ENCODE measurements at regions of chr15 and their contacts with region 1.

Region 1: DNA sequence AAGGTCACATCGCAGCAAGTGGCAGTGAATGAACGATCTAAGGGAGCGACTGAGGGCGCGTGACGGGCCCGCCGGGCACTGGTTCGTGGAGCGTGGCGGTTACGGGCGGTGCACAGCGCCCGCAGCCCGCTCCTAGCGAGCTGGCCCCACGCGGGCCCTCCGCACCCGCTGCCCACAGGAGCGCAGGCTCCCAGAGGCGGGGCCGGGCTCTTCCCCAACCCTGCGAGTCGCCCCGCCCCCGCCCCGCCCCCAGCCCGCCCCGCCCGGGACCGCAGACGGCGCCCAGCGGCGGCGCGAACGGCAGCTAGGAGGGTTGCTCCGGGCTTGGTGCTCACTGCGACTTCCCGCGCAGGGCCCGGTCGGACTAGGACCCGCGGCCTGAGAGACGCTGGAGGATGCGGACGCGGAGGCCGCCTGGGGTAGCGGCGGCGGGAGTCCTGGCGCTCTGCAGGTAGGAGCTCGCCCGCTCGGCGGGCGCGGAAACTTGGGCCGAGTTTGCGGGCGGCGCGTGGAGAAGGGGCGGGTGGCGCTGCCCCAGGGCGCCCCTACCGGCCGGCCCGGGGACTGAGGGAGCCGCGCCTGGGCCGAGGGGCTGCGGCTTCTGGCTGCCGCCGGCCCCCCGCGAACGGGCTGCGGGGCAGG is at the start of gene C15orf39:
- DNase-seq: peak; percentile 63 to 81
- H3K4me3 ChIP-seq: peak within 1 kb of the TSS; percentile 95
- H3K4me3 Mint-ChIP-seq: peak within 1 kb of the TSS; percentile 95
- H3K27ac Mint-ChIP-seq: peak within 1 kb of the TSS; percentile 91
- H3K4me1 ChIP-seq: peaks cover 45% of the 10 kb centered on the region
- H3K4me1 Mint-ChIP-seq: peaks cover 29% of the 10 kb centered on the region
- H3K27me3 ChIP-seq: no peaks in the 10 kb centered on the region
- H3K27me3 Mint-ChIP-seq: no peaks in the 10 kb centered on the region
- CTCF ChIP-seq: peak; percentile 43 to 89
- total RNA-seq, gene C15orf39: 48.2 and 56.8 TPM in 2 replicates

Region 2: GRCh38 chr15:75023181-75023871 is 178.4 kb before region 1 on chr15 and contains the start of gene PPCDC:
- CTCF ChIA-PET with region 1: interaction called, 13 read pairs
- POLR2A ChIA-PET with region 1: interaction called, 5 read pairs
- intact Hi-C with region 1: no loop called
- DNase-seq: peak; percentile 96 to 97
- H3K4me3 ChIP-seq: peak within 1 kb of the TSS; percentile 94
- H3K4me3 Mint-ChIP-seq: peak within 1 kb of the TSS; percentile 97
- H3K27ac Mint-ChIP-seq: peak within 1 kb of the TSS; percentile 99
- H3K4me1 ChIP-seq: no peaks in the 10 kb centered on the region
- H3K4me1 Mint-ChIP-seq: no peaks in the 10 kb centered on the region
- H3K27me3 ChIP-seq: no peaks in the 10 kb centered on the region
- H3K27me3 Mint-ChIP-seq: no peaks in the 10 kb centered on the region
- CTCF ChIP-seq: no peak
- total RNA-seq, gene PPCDC: 14.7 and 18.1 TPM in 2 replicates

Region 3: GRCh38 chr15:75036314-75036649 is 165.4 kb before region 1 on chr15:
- CTCF ChIA-PET with region 1: interaction called, 19 read pairs
- POLR2A ChIA-PET with region 1: interaction called, 5 read pairs
- intact Hi-C with region 1: loop called (anchors 1 kb)
- DNase-seq: peak; percentile 93 to 96
- H3K4me3 ChIP-seq: no peak overlapping the region
- H3K4me3 Mint-ChIP-seq: peak overlapping the region; percentile 25
- H3K27ac Mint-ChIP-seq: peak overlapping the region; percentile 75
- H3K4me1 ChIP-seq: peaks cover 66% of the 10 kb centered on the region
- H3K4me1 Mint-ChIP-seq: peaks cover 50% of the 10 kb centered on the region
- H3K27me3 ChIP-seq: no peaks in the 10 kb centered on the region
- H3K27me3 Mint-ChIP-seq: no peaks in the 10 kb centered on the region
- CTCF ChIP-seq: no peak

Region 4: DNA sequence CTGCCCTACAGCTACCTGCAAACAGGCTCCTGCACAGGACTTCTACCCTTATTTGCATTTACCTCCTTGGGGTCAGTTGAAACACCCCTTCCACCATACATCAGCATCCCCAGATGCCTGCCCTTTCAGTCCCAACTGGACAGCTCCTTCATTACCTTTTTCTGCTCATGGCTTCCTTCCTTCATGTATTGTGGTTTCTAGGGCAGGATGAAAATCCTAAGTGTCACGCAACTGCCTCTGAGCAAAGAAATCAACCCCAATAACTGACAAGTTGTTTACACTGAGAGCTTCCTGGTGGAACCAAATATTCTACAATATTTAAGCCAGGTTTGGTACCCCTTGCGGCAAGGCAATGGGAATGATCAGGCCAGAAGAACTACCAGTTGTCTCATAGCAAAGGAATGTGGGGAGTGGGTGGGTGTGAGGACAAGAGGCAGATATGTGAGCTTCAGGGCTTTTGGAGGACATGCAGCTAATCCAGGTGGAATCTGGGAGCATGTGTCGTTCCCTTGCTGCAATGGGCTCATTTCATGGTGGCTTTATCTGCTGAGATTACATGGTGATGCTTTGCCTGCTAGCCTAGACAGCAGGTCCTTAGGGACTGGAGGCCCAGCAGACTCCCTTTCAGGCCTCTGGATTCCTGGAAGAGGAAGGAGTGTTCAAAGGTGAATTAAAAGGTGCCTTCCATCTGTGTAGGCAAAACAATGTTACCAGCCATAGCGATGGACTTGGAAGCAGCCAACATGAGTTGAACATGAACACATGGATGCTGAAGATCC is 143.4 kb before region 1 on chr15:
- CTCF ChIA-PET with region 1: interaction called, 9 read pairs
- POLR2A ChIA-PET with region 1: interaction called, 11 read pairs
- intact Hi-C with region 1: no loop called
- DNase-seq: peak; percentile 83 to 89
- H3K4me3 ChIP-seq: no peak overlapping the region
- H3K4me3 Mint-ChIP-seq: peak overlapping the region; percentile 5
- H3K27ac Mint-ChIP-seq: peak overlapping the region; percentile 87
- H3K4me1 ChIP-seq: peaks cover 49% of the 10 kb centered on the region
- H3K4me1 Mint-ChIP-seq: peaks cover 25% of the 10 kb centered on the region
- H3K27me3 ChIP-seq: no peaks in the 10 kb centered on the region
- H3K27me3 Mint-ChIP-seq: no peaks in the 10 kb centered on the region
- CTCF ChIP-seq: no peak

Region 5: GRCh38 chr15:75138016-75138999 is 63.4 kb before region 1 on chr15:
- CTCF ChIA-PET with region 1: interaction called, 6 read pairs
- POLR2A ChIA-PET with region 1: interaction called, 19 read pairs
- intact Hi-C with region 1: loop called (anchors 5 kb)
- DNase-seq: peak; percentile 40 to 67
- H3K4me3 ChIP-seq: no peak overlapping the region
- H3K4me3 Mint-ChIP-seq: no peak overlapping the region
- H3K27ac Mint-ChIP-seq: peak overlapping the region; percentile 92
- H3K4me1 ChIP-seq: peaks cover 43% of the 10 kb centered on the region
- H3K4me1 Mint-ChIP-seq: peaks cover 30% of the 10 kb centered on the region
- H3K27me3 ChIP-seq: no peaks in the 10 kb centered on the region
- H3K27me3 Mint-ChIP-seq: no peaks in the 10 kb centered on the region
- CTCF ChIP-seq: no peak

Region 6: DNA sequence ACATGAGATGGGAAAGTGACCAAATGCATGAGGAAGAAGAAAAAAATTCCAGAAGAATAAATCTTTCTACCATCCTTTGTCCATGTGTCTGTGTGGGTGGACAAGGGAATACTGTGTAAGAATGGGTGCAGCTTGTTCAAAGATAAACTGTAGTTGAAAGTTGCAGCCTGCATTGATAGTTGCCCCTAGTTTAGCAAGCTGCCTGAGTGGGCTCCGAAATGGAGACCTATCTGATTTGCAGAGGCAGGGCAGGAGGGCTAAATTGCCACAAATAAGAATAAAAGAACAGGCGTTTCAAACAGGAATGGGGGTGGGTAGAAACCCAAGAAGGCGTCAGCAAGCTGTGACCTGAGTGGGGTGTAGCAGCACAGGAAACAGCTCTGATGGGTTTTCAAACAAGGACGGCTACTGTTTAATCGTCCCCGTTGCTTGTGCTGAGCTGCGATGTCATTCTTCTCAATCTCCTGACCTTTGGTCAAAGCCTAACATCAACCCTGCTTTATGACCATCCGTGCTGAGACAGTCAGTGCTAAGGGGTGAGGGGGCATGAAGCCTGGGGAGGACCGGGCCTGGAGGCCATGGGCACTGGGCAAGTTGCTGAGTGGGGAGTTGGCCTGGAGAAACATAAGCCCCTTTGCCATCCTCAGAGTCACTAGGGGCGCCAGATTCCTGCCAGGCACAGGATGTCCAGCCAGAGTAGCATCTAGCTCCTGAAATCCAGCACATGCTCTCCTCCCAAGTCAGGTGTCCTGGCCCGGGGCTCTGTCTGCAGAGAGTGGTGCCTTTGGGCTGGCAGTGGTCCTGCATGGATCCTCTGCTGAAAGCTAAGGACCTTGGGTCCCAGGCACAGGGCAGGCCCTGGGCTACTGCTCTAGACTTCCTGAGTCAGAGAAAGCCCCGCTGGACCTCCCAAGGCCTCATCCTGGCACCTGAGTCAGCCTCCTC is 19.3 kb before region 1 on chr15:
- CTCF ChIA-PET with region 1: interaction called, 36 read pairs
- POLR2A ChIA-PET with region 1: interaction called, 25 read pairs
- intact Hi-C with region 1: loop called (anchors 1 kb)
- DNase-seq: peak; percentile 60 to 82
- H3K4me3 ChIP-seq: no peak overlapping the region
- H3K4me3 Mint-ChIP-seq: peak overlapping the region; percentile 59
- H3K27ac Mint-ChIP-seq: peak overlapping the region; percentile 83
- H3K4me1 ChIP-seq: peaks cover 59% of the 10 kb centered on the region
- H3K4me1 Mint-ChIP-seq: peaks cover 42% of the 10 kb centered on the region
- H3K27me3 ChIP-seq: no peaks in the 10 kb centered on the region
- H3K27me3 Mint-ChIP-seq: no peaks in the 10 kb centered on the region
- CTCF ChIP-seq: peak; percentile 23 to 40

Measured in Caco-2 (cell line).